ENCODE measurements at regions of chr21 and their contacts with region 1.

Region 1: GRCh38 chr21:33924079-33924765 is 8.6 kb upstream of the ATP5PO start:
- DNase-seq: peak; percentile 94
- ATAC-seq: peak; percentile 94
- H3K4me3 Mint-ChIP-seq: no peak overlapping the region
- H3K27ac Mint-ChIP-seq: no peak overlapping the region
- H3K4me1 Mint-ChIP-seq: peaks cover 15% of the 10 kb centered on the region
- H3K27me3 Mint-ChIP-seq: peaks cover 2% of the 10 kb centered on the region

Region 2: GRCh38 chr21:33825915-33826314 is 98.3 kb before region 1 on chr21:
- CTCF ChIA-PET with region 1: no interaction called
- POLR2A ChIA-PET with region 1: no interaction called
- DNase-seq: no peak
- ATAC-seq: no peak
- H3K4me3 Mint-ChIP-seq: no peak overlapping the region
- H3K27ac Mint-ChIP-seq: no peak overlapping the region
- H3K4me1 Mint-ChIP-seq: no peaks in the 10 kb centered on the region
- H3K27me3 Mint-ChIP-seq: peaks cover 2% of the 10 kb centered on the region

Region 3: GRCh38 chr21:33940164-33940880 is 16.1 kb after region 1 on chr21:
- CTCF ChIA-PET with region 1: interaction called, 52 read pairs
- POLR2A ChIA-PET with region 1: interaction called, 3 read pairs
- DNase-seq: no peak
- ATAC-seq: no peak
- H3K4me3 Mint-ChIP-seq: no peak overlapping the region
- H3K27ac Mint-ChIP-seq: no peak overlapping the region
- H3K4me1 Mint-ChIP-seq: peaks cover 65% of the 10 kb centered on the region
- H3K27me3 Mint-ChIP-seq: no peaks in the 10 kb centered on the region

Region 4: GRCh38 chr21:33976082-33977016 is 52.1 kb after region 1 on chr21:
- CTCF ChIA-PET with region 1: interaction called, 19 read pairs
- POLR2A ChIA-PET with region 1: interaction called, 7 read pairs
- DNase-seq: peak; percentile 66
- ATAC-seq: peak; percentile 57
- H3K4me3 Mint-ChIP-seq: peak overlapping the region; percentile 54
- H3K27ac Mint-ChIP-seq: peak overlapping the region; percentile 95
- H3K4me1 Mint-ChIP-seq: peaks cover 73% of the 10 kb centered on the region
- H3K27me3 Mint-ChIP-seq: no peaks in the 10 kb centered on the region

Region 5: DNA sequence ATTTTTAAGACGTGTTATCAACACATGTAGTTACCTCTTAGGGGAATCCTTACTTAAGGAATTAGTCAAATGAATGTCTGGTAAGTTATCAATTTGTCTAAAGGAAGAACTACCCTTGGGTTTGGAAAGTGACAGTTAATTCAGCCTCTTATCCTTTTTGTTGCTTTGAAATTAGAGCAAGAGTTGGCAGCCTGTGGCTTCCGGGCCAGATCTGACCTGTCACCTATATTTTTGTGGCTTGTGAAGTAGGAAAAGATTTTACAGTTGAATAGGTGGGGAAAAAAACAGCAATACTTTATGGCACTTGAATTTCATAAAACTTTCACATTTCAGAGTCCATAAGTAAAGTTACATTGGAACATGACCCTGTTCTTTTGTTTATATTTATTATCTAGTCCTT is 154.7 kb after region 1 on chr21:
- CTCF ChIA-PET with region 1: interaction called, 63 read pairs
- POLR2A ChIA-PET with region 1: interaction called, 11 read pairs
- DNase-seq: peak; percentile 56
- ATAC-seq: no peak
- H3K4me3 Mint-ChIP-seq: peak overlapping the region; percentile 49
- H3K27ac Mint-ChIP-seq: peak overlapping the region; percentile 73
- H3K4me1 Mint-ChIP-seq: peaks cover 90% of the 10 kb centered on the region
- H3K27me3 Mint-ChIP-seq: no peaks in the 10 kb centered on the region

Region 6: DNA sequence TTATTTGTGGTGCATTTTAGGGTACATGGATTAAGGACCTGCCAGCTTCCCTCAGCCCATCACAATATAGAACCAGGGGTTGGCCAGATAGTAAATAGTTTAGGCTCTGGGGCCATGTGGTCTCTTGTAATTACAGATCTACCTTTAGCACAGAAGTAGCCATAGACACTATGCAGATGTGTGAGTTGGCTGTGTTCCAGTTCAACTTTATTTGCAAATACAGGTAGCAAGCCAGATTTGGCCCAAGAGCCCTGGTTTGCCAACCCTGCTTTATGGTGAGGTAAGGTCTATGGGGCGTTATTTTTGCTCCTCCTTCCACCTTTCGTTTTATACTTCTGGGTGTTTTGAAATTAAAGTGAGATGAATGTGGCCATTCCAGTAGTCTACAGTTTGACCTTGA is 197.8 kb after region 1 on chr21:
- CTCF ChIA-PET with region 1: interaction called, 17 read pairs
- POLR2A ChIA-PET with region 1: no interaction called
- DNase-seq: no peak
- ATAC-seq: no peak
- H3K4me3 Mint-ChIP-seq: no peak overlapping the region
- H3K27ac Mint-ChIP-seq: no peak overlapping the region
- H3K4me1 Mint-ChIP-seq: peaks cover 11% of the 10 kb centered on the region
- H3K27me3 Mint-ChIP-seq: no peaks in the 10 kb centered on the region

Region 7: DNA sequence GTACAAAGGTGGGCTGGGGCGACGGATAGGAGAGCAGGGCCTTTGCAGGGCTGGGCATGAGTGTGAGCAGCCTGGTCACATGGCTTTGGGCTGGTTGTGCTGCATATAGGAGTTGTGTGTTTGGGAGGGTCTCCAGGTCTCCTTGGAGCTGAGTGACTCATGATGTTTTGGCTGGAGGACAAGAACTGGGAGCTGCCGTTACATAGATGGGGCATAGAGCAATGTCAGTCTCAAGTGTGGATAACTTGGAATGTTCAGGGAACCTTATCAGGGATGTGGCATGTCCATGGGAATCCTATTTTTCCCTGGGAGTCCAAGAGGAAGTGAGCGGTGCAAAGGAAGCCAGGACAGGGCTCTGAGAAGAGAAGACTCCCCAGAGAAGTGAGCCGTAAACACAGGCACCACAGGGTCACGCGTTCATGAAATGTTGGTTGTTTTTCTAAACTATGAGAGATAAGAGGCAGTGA is 303.2 kb after region 1 on chr21:
- CTCF ChIA-PET with region 1: interaction called, 12 read pairs
- POLR2A ChIA-PET with region 1: no interaction called
- DNase-seq: no peak
- ATAC-seq: no peak
- H3K4me3 Mint-ChIP-seq: no peak overlapping the region
- H3K27ac Mint-ChIP-seq: no peak overlapping the region
- H3K4me1 Mint-ChIP-seq: no peaks in the 10 kb centered on the region
- H3K27me3 Mint-ChIP-seq: no peaks in the 10 kb centered on the region

Region 8: GRCh38 chr21:34367321-34367935 is 443.2 kb after region 1 on chr21:
- CTCF ChIA-PET with region 1: interaction called, 34 read pairs
- POLR2A ChIA-PET with region 1: no interaction called
- DNase-seq: peak; percentile 68
- ATAC-seq: peak; percentile 78
- H3K4me3 Mint-ChIP-seq: no peak overlapping the region
- H3K27ac Mint-ChIP-seq: no peak overlapping the region
- H3K4me1 Mint-ChIP-seq: no peaks in the 10 kb centered on the region
- H3K27me3 Mint-ChIP-seq: peaks cover 13% of the 10 kb centered on the region